CD14-positive monocyte (primary cell): ENCODE measurements at regions of chr7 and their contacts with region 1.

Region 1: DNA sequence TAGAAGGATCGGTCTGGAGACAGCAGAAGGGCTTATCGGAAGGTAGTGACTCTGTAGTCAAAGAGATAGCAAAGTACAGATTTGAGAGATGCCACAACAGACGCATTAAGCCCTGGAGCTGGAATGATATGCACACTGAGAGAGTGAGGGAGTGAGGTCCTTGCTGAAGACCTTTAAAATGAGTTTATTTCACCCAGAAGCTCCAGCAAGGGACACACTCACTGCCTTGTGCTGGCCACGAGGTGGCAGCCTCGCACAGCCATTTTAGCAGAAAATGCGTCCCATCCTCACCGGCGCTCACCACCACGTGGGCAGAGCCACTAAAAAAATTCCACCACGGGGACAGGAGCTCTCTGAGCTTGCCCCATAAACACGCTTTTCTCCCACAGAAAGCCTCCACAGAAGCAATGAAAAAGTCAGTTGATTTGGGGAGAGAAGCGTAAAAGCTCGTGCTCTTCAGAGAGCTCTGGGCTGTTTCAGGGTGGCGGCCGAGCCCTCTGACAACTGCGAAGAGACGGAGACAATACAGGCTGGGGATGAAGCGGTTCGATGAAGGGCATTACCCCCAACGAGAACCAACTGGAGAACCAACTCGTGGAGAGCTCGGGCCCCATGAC is 163.0 kb upstream of the KLF14 start:
- DNase-seq: peak; percentile 70 to 85 (median 80)
- H3K4me3 ChIP-seq: no peak overlapping the region
- H3K4me3 Mint-ChIP-seq: no peak overlapping the region
- H3K27ac ChIP-seq: no peak overlapping the region
- H3K27ac Mint-ChIP-seq: peak overlapping the region in 6 of 7 donors; percentile 28 to 88 (median 74)
- H3K4me1 ChIP-seq: peaks cover 10 to 12% of the 10 kb centered on the region in 2 donors
- H3K4me1 Mint-ChIP-seq: peaks cover 41% of the 10 kb centered on the region
- H3K27me3 ChIP-seq: no peaks in the 10 kb centered on the region
- H3K27me3 Mint-ChIP-seq: no peaks in the 10 kb centered on the region
- CTCF ChIP-seq: peak; percentile 83

Region 2: DNA sequence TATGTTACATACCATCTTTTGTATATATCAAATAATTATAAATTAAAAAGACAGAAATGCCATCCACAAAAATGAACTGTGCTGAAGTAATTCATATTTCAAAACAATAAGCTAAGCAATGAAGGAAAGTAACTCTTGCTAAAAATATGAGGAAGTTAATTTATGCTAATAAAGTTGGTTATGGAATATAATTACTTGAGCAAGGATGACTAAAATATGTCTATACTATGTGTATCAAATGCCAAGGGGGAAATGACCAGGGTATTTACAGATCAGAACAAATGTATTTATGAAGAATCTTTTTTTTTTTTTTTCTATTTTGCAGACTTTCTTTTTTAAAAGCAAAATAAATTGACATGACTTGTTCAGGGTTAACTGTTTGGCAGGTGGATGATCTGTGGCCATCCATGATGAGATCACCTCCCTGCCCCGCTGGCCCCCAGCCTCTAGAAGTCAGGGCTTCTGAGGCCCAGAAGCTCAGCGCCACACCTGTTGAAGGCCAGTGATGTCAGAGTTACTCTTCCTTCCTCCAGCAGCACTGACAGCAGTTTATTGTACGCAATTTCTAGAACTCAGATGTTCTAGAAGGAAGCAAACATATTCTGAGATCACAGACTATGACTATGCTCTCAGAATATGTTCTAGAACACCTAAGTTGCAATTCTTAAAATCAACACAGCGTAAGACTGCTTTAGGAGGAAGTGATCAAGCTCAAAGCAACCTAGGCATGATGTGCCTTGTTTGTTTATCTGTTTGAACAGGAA is 33.1 kb after region 1 on chr7:
- intact Hi-C with region 1: loop called in 1 of 2 experiments (anchors 5 kb)
- DNase-seq: peak; percentile 68 to 73 (median 70)
- H3K4me3 ChIP-seq: no peak overlapping the region
- H3K4me3 Mint-ChIP-seq: peak overlapping the region in 1 of 2 donors; percentile 20
- H3K27ac ChIP-seq: peak overlapping the region; percentile 71 to 90
- H3K27ac Mint-ChIP-seq: peak overlapping the region; percentile 79 to 98 (median 93)
- H3K4me1 ChIP-seq: peaks cover 35 to 49% of the 10 kb centered on the region in 2 donors
- H3K4me1 Mint-ChIP-seq: peaks cover 55% of the 10 kb centered on the region
- H3K27me3 ChIP-seq: no peaks in the 10 kb centered on the region
- H3K27me3 Mint-ChIP-seq: peaks cover 0 to 4% (median 0%) of the 10 kb centered on the region in 3 donors
- CTCF ChIP-seq: no peak

Region 3: GRCh38 chr7:130941322-130942210 is 44.6 kb after region 1 on chr7:
- intact Hi-C with region 1: loop called in 1 of 2 experiments (anchors 5 kb)
- DNase-seq: peak in 2 of 3 donors; percentile 42 to 78
- H3K4me3 ChIP-seq: peak overlapping the region; percentile 25 to 69 (median 52)
- H3K4me3 Mint-ChIP-seq: peak overlapping the region; percentile 84 to 85
- H3K27ac ChIP-seq: peak overlapping the region; percentile 33 to 94
- H3K27ac Mint-ChIP-seq: peak overlapping the region; percentile 75 to 95 (median 90)
- H3K4me1 ChIP-seq: peaks cover 5 to 19% of the 10 kb centered on the region in 2 donors
- H3K4me1 Mint-ChIP-seq: peaks cover 35% of the 10 kb centered on the region
- H3K27me3 ChIP-seq: no peaks in the 10 kb centered on the region
- H3K27me3 Mint-ChIP-seq: peaks cover 0 to 2% (median 0%) of the 10 kb centered on the region in 3 donors
- CTCF ChIP-seq: no peak

Region 4: DNA sequence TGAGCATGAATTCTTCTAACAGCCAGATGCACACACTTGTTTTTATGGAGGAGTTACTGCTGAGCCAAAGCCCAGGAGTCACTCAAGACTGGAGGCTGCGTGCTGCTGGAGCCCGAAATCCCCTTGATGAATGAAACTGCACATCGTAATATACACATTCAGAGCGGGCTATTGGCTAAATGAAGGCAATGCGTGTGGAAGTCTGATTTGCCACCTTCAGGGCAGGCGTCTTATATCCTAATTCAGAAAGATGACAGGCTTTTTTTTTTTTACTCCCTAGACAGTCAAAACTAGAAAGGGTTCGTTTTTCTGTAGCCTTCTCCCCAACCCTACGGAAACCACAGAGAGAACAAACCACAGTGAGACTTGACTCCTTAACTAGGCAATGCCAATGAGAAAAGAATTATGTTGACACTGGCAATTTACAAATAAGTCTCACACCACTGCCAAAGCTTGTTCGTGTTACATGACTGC is 64.2 kb after region 1 on chr7:
- intact Hi-C with region 1: loop called in 1 of 2 experiments (anchors 5 kb)
- DNase-seq: peak; percentile 48 to 92 (median 85)
- H3K4me3 ChIP-seq: peak overlapping the region in 2 of 3 experiments; percentile 40 to 46
- H3K4me3 Mint-ChIP-seq: peak overlapping the region; percentile 79 to 80
- H3K27ac ChIP-seq: peak overlapping the region; percentile 72 to 95
- H3K27ac Mint-ChIP-seq: peak overlapping the region; percentile 95 to 99 (median 97)
- H3K4me1 ChIP-seq: peaks cover 48 to 74% of the 10 kb centered on the region in 2 donors
- H3K4me1 Mint-ChIP-seq: peaks cover 71% of the 10 kb centered on the region
- H3K27me3 ChIP-seq: no peaks in the 10 kb centered on the region
- H3K27me3 Mint-ChIP-seq: peaks cover 0 to 1% (median 0%) of the 10 kb centered on the region in 3 donors
- CTCF ChIP-seq: no peak

Region 5: DNA sequence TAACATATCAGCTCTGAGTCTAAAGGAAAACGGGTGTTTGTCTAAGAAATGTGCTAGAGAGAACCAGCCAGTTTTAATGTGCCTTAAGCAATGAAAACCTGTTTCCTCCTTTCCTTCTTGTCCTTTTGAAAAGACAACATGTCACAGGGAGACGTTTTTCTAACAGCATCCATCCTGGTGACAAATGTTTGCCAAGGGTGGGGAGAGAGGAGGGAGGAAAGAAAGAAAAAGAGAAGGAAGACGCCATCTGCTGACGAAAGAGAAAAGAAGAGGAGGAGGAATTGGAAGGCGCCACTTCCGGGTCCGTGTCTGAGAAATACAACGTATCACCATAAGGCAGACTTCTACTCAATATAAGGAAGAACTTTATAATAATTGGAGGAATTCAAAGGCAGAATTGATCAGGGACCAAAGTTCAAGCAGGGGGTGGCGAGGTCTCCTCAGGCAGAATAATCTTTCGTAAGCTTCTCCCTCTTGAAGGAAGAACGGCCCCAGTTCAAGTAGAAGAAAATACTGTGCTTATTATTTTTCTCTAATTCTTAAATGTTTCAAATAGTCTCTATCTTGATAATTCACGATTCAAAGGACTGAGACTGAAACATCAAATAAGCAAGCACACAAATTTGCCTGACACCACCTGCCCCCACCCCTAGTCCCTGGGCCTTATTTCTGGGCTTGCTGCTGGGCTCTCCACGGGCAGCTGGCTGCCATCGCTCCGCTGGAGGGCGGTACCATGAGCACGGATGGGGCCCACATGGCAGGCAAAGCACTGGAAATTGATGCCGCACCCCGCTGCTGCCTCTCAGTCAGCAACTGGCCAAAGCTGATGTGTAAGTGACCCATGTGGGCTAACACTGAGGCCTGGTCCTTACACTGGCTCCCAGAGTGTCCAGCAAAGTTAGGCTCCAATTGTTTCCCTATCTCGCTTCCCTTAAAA is 110.7 kb after region 1 on chr7:
- intact Hi-C with region 1: loop called (anchors 5 kb)
- DNase-seq: peak; percentile 62 to 74 (median 73)
- H3K4me3 ChIP-seq: peak overlapping the region in 1 of 3 experiments; percentile 23
- H3K4me3 Mint-ChIP-seq: peak overlapping the region; percentile 45 to 86
- H3K27ac ChIP-seq: peak overlapping the region; percentile 29 to 35
- H3K27ac Mint-ChIP-seq: peak overlapping the region; percentile 75 to 88 (median 82)
- H3K4me1 ChIP-seq: peaks cover 49 to 53% of the 10 kb centered on the region in 2 donors
- H3K4me1 Mint-ChIP-seq: peaks cover 61% of the 10 kb centered on the region
- H3K27me3 ChIP-seq: no peaks in the 10 kb centered on the region
- H3K27me3 Mint-ChIP-seq: peaks cover 0 to 4% (median 0%) of the 10 kb centered on the region in 3 donors
- CTCF ChIP-seq: peak; percentile 50

Region 6: DNA sequence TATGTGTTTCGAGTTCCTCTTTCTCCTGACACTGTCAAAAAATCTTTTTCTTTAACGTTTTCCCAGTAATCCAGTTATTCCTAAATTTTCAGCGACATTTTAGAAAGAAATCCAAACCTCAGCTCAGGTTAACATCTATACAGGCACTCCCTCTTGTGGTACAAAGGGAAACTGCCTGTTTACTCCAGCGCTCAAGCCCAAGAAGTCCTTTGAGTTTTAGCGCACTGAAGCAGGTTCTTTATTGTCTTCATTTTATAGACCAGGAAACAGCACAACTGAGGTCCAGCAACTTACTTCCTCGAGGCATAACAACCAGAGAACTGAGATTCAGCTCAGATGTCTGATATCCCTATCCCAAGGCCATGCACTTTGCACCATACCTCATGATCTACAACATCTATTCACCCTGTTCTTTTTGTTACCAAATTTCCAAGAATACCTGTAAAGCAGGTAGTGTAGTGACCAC is 143.5 kb after region 1 on chr7:
- intact Hi-C with region 1: loop called (anchors 2 to 5 kb)
- DNase-seq: peak; percentile 42 to 58 (median 54)
- H3K4me3 ChIP-seq: no peak overlapping the region
- H3K4me3 Mint-ChIP-seq: peak overlapping the region in 1 of 2 donors; percentile 64
- H3K27ac ChIP-seq: no peak overlapping the region
- H3K27ac Mint-ChIP-seq: no peak overlapping the region
- H3K4me1 ChIP-seq: peaks cover 0 to 9% of the 10 kb centered on the region in 2 donors
- H3K4me1 Mint-ChIP-seq: peaks cover 17% of the 10 kb centered on the region
- H3K27me3 ChIP-seq: no peaks in the 10 kb centered on the region
- H3K27me3 Mint-ChIP-seq: no peaks in the 10 kb centered on the region
- CTCF ChIP-seq: peak; percentile 90